Activated CD8-positive, alpha-beta T cell treated with anti-CD3 and anti-CD28 coated beads, Interleukin-2, amount 10 ng/mL, durations not matched to agents 7 days and 5 days (primary cell): ENCODE measurements at regions of chr3 and their contacts with region 1.

Region 1: DNA sequence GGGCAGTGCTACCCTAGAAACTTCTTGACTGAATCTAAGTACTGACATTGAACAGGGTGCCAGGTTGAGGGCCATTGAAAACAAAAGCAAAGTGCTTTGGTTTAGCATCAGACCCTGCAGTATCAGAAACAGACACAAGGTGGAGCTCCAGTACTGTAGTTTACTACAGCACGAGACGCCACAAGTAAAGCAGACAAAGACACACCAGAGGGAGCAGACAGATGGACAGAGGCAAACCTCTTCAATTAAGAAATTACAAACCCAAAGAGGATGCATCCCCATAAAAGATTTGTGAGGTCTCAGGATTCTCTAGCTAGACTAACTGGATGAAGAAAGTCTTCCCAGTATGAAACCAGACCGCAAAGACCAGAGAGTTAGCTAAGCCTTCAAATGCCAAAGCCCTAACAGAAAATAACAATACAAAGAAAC is 16.6 kb downstream of the TOP2B start:
- DNase-seq: peak; percentile 90
- ATAC-seq: peak; percentile 94
- H3K4me3 Mint-ChIP-seq: no peak overlapping the region
- H3K27ac Mint-ChIP-seq: no peak overlapping the region
- H3K4me1 Mint-ChIP-seq: peaks cover 33% of the 10 kb centered on the region
- H3K27me3 Mint-ChIP-seq: no peaks in the 10 kb centered on the region

Region 2: DNA sequence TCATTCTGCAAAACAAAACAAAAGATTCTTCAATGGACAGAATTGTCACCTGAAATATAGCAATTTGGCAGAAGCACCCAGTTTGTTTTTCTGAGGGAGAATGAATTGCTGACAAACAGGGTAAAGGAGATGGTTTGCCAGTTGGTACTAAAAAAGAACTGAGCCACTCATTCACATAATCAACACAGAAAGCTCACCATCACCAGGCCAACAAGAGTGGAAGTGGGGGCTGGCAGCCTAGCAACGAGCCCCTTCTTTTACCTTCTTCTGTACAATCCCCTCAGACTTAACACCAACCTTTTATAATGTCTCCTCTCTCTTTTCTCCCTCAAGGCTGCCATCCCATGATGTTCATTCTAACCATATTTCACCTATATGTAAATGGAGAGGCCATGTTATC is 10.7 kb after region 1 on chr3:
- CTCF ChIA-PET with region 1: interaction called, 20 read pairs
- POLR2A ChIA-PET with region 1: interaction called, 3 read pairs
- DNase-seq: no peak
- ATAC-seq: no peak
- H3K4me3 Mint-ChIP-seq: no peak overlapping the region
- H3K27ac Mint-ChIP-seq: no peak overlapping the region
- H3K4me1 Mint-ChIP-seq: peaks cover 52% of the 10 kb centered on the region
- H3K27me3 Mint-ChIP-seq: no peaks in the 10 kb centered on the region

Region 3: GRCh38 chr3:25664810-25665314 is 16.7 kb after region 1 on chr3 and contains the start of gene TOP2B:
- CTCF ChIA-PET with region 1: interaction called, 27 read pairs
- POLR2A ChIA-PET with region 1: interaction called, 3 read pairs
- DNase-seq: peak; percentile 96
- ATAC-seq: peak; percentile 92
- H3K4me3 Mint-ChIP-seq: peak within 1 kb of the TSS; percentile 88
- H3K27ac Mint-ChIP-seq: peak within 1 kb of the TSS; percentile 96
- H3K4me1 Mint-ChIP-seq: peaks cover 35% of the 10 kb centered on the region
- H3K27me3 Mint-ChIP-seq: no peaks in the 10 kb centered on the region
- total RNA-seq, gene TOP2B: 112 to 114 TPM

Region 4: GRCh38 chr3:25782938-25783660 is 135.0 kb after region 1 on chr3 and contains the start of gene NGLY1:
- CTCF ChIA-PET with region 1: interaction called, 22 read pairs
- POLR2A ChIA-PET with region 1: no interaction called
- DNase-seq: peak; percentile 87
- ATAC-seq: peak; percentile 95
- H3K4me3 Mint-ChIP-seq: peak within 1 kb of the TSS; percentile 90
- H3K27ac Mint-ChIP-seq: peak within 1 kb of the TSS; percentile 88
- H3K4me1 Mint-ChIP-seq: peaks cover 39% of the 10 kb centered on the region
- H3K27me3 Mint-ChIP-seq: no peaks in the 10 kb centered on the region
- total RNA-seq, gene NGLY1: 64.3 to 65.6 TPM

Region 5: GRCh38 chr3:25831578-25831977 is 183.5 kb after region 1 on chr3:
- CTCF ChIA-PET with region 1: interaction called, 15 read pairs
- POLR2A ChIA-PET with region 1: no interaction called
- DNase-seq: no peak
- ATAC-seq: no peak
- H3K4me3 Mint-ChIP-seq: no peak overlapping the region
- H3K27ac Mint-ChIP-seq: no peak overlapping the region
- H3K4me1 Mint-ChIP-seq: peaks cover 3% of the 10 kb centered on the region
- H3K27me3 Mint-ChIP-seq: peaks cover 15% of the 10 kb centered on the region

Region 6: GRCh38 chr3:25856902-25857518 is 208.9 kb after region 1 on chr3:
- CTCF ChIA-PET with region 1: interaction called, 111 read pairs
- POLR2A ChIA-PET with region 1: interaction called, 3 read pairs
- DNase-seq: peak; percentile 28
- ATAC-seq: peak; percentile 73
- H3K4me3 Mint-ChIP-seq: no peak overlapping the region
- H3K27ac Mint-ChIP-seq: no peak overlapping the region
- H3K4me1 Mint-ChIP-seq: peaks cover 5% of the 10 kb centered on the region
- H3K27me3 Mint-ChIP-seq: no peaks in the 10 kb centered on the region